Dorsolateral prefrontal cortex (tissue), 120 donors: ENCODE measurements at regions of chr18 and their contacts with region 1.

Region 1: DNA sequence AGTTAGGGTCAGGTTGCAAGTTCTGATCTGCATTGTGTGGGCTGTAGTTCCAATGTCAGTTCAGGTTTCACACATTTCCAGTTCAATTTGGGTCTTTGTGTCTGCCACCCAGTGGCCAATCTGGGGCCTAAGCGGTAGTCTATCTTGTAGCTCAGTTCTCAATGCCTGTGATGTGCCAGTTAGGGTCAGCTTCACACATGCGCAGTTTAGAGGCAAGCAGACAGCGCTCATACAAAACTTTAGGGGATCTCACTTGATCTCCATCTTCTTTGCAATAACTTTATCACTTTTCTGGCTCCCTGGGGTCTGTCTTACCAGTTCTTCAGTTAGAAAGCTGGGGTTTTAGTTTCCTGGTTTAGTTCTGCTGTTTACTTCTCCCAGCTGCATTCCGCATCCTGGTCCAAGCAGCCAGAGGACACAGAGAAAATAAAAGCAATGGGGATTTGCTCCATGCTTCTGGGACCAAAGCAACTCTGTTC is 11.0 kb upstream of the ZNF24 start:
- DNase-seq: peak; percentile 64 to 94 (median 82)
- H3K4me3 ChIP-seq: peak overlapping the region in 51 of 59 donors; percentile 6 to 62 (median 36)
- H3K27ac ChIP-seq: peak overlapping the region in 57 of 59 donors; percentile 5 to 92 (median 80)
- H3K27me3 ChIP-seq: no peaks in the 10 kb centered on the region
- CTCF ChIP-seq: peak; percentile 36 to 89 (median 79)

Region 2: GRCh38 chr18:35029770-35030169 is 325.4 kb before region 1 on chr18:
- intact Hi-C with region 1: loop called in 1 of 2 experiments (anchors 10 kb)
- DNase-seq: no peak
- H3K4me3 ChIP-seq: peak overlapping the region in 57 of 59 donors; percentile 0 to 61 (median 39)
- H3K27ac ChIP-seq: peak overlapping the region in 40 of 59 donors; percentile 2 to 82 (median 48)
- H3K27me3 ChIP-seq: no peaks in the 10 kb centered on the region
- CTCF ChIP-seq: peak in 15 of 56 donors; percentile 8 to 31 (median 13)

Region 3: GRCh38 chr18:35231052-35231451 is 124.1 kb before region 1 on chr18:
- intact Hi-C with region 1: loop called in 1 of 2 experiments (anchors 1 kb)
- DNase-seq: peak; percentile 75 to 90 (median 81)
- H3K4me3 ChIP-seq: peak overlapping the region in 47 of 59 donors; percentile 0 to 61 (median 34)
- H3K27ac ChIP-seq: peak overlapping the region in 53 of 59 donors; percentile 1 to 98 (median 76)
- H3K27me3 ChIP-seq: no peaks in the 10 kb centered on the region
- CTCF ChIP-seq: peak; percentile 73 to 98 (median 94)

Region 4: GRCh38 chr18:35290073-35290735 is 65.0 kb before region 1 on chr18 and contains the start of gene ZSCAN30:
- intact Hi-C with region 1: no loop called
- DNase-seq: peak; percentile 88 to 95 (median 94)
- H3K4me3 ChIP-seq: peak within 1 kb of the TSS; percentile 63 to 99 (median 86)
- H3K27ac ChIP-seq: peak within 1 kb of the TSS; percentile 26 to 96 (median 85)
- H3K27me3 ChIP-seq: no peaks in the 10 kb centered on the region
- CTCF ChIP-seq: peak in 23 of 56 donors; percentile 8 to 47 (median 21)
- total RNA-seq, gene ZSCAN30: 17.0 to 49.2 (median 28.7) TPM